OCI-LY7 (cell line): ENCODE measurements at regions of chr1 and their contacts with region 1.

Region 1: DNA sequence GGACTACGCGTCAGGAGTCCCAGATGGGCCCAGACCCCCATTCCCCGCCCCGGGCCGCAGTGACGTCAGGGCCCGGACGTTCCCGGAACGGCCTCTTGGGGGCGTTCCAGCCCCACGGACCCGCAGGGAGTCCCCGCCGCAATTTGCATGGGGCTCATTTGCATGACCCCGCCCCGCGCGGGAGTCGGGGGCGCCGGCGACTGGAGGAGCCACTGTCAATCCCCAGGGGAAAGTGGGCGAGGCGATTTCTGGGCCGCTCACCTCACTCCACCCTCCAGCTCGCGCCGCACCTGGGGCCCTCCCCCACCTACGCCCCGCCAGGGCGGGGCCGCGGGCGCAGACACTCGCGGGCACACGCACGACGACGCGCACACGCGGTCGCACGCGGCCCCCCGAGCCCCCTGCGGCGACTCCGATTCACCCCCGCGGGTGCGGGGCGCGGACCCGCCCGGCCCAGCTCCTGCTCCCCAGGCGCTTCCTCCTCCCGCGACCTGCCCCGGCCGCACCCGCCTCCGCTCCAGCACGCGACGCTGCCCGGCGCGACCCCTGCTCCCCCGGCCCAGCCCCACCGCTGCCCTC is 13.2 kb downstream of the AGRN start:
- DNase-seq: peak; percentile 97
- H3K4me3 ChIP-seq: peak overlapping the region; percentile 62
- H3K27ac ChIP-seq: no peak overlapping the region
- H3K4me1 ChIP-seq: peaks cover 26% of the 10 kb centered on the region
- CTCF ChIP-seq: peak; percentile 83

Region 2: DNA sequence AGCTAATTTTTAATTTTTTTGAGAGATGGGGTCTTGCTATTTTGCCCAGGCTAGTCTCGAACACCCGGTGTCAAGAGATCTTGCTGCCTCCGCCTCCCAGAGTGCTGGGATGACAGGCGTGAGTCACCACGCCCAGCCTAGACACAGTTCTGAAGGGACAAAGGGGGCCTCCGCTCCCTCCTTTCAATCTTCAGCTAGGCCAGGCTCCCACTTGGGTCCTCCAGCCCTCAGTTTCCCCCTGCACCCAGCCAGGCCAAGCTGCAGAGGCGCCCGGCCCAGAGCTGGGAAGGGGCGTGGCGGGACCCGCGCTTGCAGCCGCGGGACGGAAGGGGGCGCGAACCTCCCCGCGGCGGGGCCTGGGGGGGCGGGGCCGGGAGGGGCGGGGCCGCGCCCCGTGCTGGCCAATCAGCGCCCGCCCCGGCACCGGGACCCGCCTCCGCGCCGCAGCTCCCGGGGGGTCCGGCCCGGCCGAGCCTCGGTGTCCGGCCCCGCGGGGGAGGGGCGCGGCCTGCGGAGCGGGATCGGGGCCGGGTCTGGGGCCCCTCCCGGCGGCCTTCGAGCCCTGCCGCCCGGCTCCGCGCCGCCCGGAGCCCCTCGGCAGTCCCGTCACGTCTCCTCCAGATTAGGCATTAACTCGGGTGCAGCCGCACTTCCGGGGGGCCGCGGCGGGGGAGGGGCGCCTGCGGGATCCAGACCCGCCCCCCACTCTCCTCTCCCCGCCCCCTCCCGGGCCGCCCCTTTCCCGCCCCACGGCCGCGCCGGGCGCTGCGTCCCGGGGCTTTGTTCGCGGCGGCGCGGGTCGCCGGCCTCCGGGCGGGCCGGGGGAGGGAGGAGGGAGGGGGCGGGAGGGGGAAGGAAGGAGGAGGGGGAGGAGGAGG is 13.7 kb before region 1 on chr1:
- CTCF ChIA-PET with region 1: no interaction called
- POLR2A ChIA-PET with region 1: no interaction called
- intact Hi-C with region 1: loop called (anchors 1 kb)
- DNase-seq: peak; percentile 87
- H3K4me3 ChIP-seq: peak overlapping the region; percentile 65
- H3K27ac ChIP-seq: no peak overlapping the region
- H3K4me1 ChIP-seq: peaks cover 17% of the 10 kb centered on the region
- CTCF ChIP-seq: peak; percentile 45

Region 3: GRCh38 chr1:1091663-1092478 is 58.8 kb after region 1 on chr1:
- CTCF ChIA-PET with region 1: no interaction called
- POLR2A ChIA-PET with region 1: no interaction called
- intact Hi-C with region 1: no loop called
- DNase-seq: no peak
- H3K4me3 ChIP-seq: no peak overlapping the region
- H3K27ac ChIP-seq: no peak overlapping the region
- H3K4me1 ChIP-seq: peaks cover 6% of the 10 kb centered on the region
- CTCF ChIP-seq: no peak

Region 4: DNA sequence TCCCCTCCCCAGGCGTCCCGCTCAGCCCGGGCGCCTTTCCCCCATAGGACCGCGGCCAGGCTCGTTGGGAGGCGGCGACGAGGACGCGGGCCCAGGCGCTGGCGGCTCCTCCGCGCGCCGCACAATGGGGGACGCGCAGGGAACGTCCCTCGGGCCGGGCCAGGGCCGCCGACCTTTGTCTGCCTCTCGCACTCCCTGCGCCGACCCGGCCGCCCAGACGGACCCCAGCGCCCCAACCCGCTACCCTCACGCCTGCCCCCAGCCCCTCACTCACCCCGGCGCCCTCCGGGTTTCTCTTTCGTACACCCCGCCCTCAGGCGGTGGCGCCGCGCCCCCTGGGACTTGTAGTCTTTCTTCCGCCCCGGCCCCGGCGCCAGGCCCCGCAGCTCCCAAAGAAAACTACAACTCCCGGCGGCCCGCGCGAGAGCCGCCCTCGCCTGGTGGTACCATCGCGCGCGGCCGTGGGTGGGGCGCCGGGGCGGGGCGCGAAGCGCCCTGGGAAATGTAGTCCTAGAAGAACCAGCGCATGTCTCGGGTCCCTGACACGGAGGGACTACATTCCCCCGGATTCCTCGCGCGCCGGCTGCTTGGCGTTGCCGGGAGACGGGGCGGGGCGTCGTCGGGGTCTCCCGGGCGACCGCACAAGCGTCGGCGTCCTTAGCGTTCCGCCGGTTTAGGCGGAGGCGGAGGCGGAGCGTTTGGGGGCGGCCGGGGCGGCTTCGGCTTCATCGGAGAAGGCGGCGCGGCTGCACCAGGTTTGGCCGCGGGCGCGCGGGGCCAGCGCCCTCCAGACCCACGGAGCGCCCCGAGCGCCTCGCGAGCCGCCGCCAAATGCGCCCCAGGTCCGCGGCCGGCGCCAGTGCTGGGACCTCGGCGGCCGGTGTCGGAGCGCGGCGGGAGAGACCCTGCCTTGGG is 82.9 kb after region 1 on chr1 and contains the start of gene C1orf159:
- CTCF ChIA-PET with region 1: no interaction called
- POLR2A ChIA-PET with region 1: no interaction called
- intact Hi-C with region 1: loop called (anchors 2 kb)
- DNase-seq: peak; percentile 98
- H3K4me3 ChIP-seq: peak within 1 kb of the TSS; percentile 95
- H3K27ac ChIP-seq: no peak within 1 kb of the TSS
- H3K4me1 ChIP-seq: peaks cover 5% of the 10 kb centered on the region
- CTCF ChIP-seq: no peak
- total RNA-seq, gene C1orf159: 13.1 and 27.6 TPM in 2 replicates

Region 5: GRCh38 chr1:1291548-1292441 is 258.7 kb after region 1 on chr1:
- CTCF ChIA-PET with region 1: no interaction called
- POLR2A ChIA-PET with region 1: no interaction called
- intact Hi-C with region 1: loop called (anchors 2 kb)
- DNase-seq: peak; percentile 85
- H3K4me3 ChIP-seq: no peak overlapping the region
- H3K27ac ChIP-seq: no peak overlapping the region
- H3K4me1 ChIP-seq: no peaks in the 10 kb centered on the region
- CTCF ChIP-seq: peak; percentile 85